Panc1 (cell line): ENCODE measurements at regions of chr6 and their contacts with region 1.

Region 1: DNA sequence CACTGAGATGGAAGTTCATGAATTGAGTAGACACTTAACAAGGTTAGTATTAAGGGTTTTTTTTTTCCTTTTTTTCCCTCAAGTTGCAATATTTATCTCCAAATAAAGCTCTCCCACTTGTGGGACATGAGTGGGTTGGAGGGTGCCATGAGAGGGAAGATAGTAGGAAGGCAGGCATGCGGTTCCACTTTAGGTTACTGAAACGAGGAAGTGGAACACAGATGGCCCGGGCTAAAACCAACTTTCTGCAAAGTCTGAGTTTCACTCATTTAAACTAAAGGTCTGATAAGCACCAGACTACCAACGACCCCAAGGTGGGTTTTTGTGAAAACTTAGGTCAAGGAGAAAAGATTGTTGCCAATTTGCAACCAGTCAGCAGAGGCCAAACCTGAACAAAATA is 42.2 kb downstream of the TBC1D7 start:
- DNase-seq: no peak
- ATAC-seq: no peak
- H3K4me3 ChIP-seq: no peak overlapping the region
- H3K27ac ChIP-seq: no peak overlapping the region
- H3K4me1 ChIP-seq: no peaks in the 10 kb centered on the region
- H3K27me3 ChIP-seq: no peaks in the 10 kb centered on the region
- CTCF ChIP-seq: no peak

Region 2: GRCh38 chr6:13125841-13126240 is 160.3 kb before region 1 on chr6:
- CTCF ChIA-PET with region 1: no interaction called
- POLR2A ChIA-PET with region 1: interaction called, 13 read pairs
- in situ Hi-C with region 1: no loop called
- intact Hi-C with region 1: no loop called
- DNase-seq: no peak
- ATAC-seq: no peak
- H3K4me3 ChIP-seq: no peak overlapping the region
- H3K27ac ChIP-seq: no peak overlapping the region
- H3K4me1 ChIP-seq: no peaks in the 10 kb centered on the region
- H3K27me3 ChIP-seq: no peaks in the 10 kb centered on the region; the same call in 1 of the 2 replicates
- CTCF ChIP-seq: no peak